GM13977 (cell line): ENCODE measurements at regions of chr12 and their contacts with region 1.

Region 1: GRCh38 chr12:110826592-110827200 is 20.1 kb upstream of the CCDC63 start:
- DNase-seq: peak; percentile 84
- CTCF ChIP-seq: peak; percentile 94

Region 2: GRCh38 chr12:110449799-110450497 is 376.7 kb before region 1 on chr12 and contains the start of gene ARPC3:
- in situ Hi-C with region 1: loop called (anchors 10 kb)
- DNase-seq: peak; percentile 87
- CTCF ChIP-seq: peak; percentile 97

Region 3: GRCh38 chr12:110613771-110614684 is 212.7 kb before region 1 on chr12 and contains the start of gene TCTN1:
- in situ Hi-C with region 1: loop called (anchors 10 kb)
- DNase-seq: peak; percentile 94
- CTCF ChIP-seq: no peak